ENCODE measurements at regions of chr4 and their contacts with region 1.

Region 1: GRCh38 chr4:55906999-55907398 is 41.7 kb upstream of the CEP135 start:
- DNase-seq: no peak
- H3K4me3 Mint-ChIP-seq: no peak overlapping the region
- H3K27ac Mint-ChIP-seq: peak overlapping the region; percentile 65
- H3K4me1 Mint-ChIP-seq: peaks cover 24% of the 10 kb centered on the region
- H3K27me3 Mint-ChIP-seq: no peaks in the 10 kb centered on the region

Region 2: DNA sequence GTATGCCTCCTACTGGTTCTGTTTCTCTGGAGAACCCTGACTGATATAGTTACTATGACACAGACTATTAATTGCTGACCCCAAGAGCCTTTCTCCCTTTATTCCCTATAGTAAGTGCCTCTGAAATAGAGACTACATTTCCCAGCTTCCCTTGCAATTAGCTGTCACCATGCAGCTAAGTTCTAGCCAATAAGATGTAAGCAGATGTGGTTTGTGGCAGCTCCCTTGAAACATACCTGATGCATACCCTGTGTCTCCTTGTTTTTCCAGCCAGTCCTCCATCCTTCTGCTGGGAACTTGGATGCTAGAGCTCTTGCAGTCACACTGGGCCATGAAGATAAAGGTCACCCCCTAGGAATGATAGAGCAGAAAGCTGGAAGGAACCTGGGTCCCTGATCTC is 520.9 kb before region 1 on chr4:
- CTCF ChIA-PET with region 1: no interaction called
- POLR2A ChIA-PET with region 1: no interaction called
- intact Hi-C with region 1: no loop called
- DNase-seq: no peak
- H3K4me3 Mint-ChIP-seq: no peak overlapping the region
- H3K27ac Mint-ChIP-seq: no peak overlapping the region
- H3K4me1 Mint-ChIP-seq: peaks cover 7% of the 10 kb centered on the region
- H3K27me3 Mint-ChIP-seq: no peaks in the 10 kb centered on the region

Region 3: DNA sequence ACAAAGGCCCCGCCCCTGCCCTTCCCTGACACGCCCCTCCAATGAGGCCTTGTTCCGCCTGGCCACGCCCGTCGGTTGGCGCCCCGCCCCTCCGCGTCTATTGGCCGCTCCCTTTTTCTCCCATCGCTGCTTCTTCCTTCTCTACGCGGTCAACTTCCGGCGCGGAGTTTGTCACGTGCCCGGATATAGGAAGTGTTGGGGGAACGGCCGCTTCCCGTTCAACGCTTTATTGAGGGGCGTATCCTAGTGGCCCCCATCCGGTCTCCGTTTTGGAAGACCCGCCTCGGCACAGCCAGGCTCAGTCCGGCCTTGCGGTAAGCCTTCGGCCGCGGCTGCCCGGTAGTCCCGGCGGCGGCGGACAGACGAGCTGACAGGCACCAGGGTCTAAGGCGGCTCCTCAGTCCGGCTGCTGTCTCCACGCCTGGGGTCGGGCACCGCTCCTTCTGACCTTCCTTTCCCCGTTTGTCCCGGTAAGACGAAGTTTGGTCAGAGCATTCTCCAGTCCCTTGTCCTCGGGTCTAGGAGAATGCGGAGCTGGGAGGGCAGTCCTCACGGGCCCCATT is 53.4 kb before region 1 on chr4 and contains the start of gene EXOC1:
- CTCF ChIA-PET with region 1: no interaction called
- POLR2A ChIA-PET with region 1: no interaction called
- intact Hi-C with region 1: loop called (anchors 2 kb)
- DNase-seq: peak; percentile 99
- H3K4me3 Mint-ChIP-seq: peak within 1 kb of the TSS; percentile 7
- H3K27ac Mint-ChIP-seq: peak within 1 kb of the TSS; percentile 82
- H3K4me1 Mint-ChIP-seq: peaks cover 33% of the 10 kb centered on the region
- H3K27me3 Mint-ChIP-seq: no peaks in the 10 kb centered on the region
- total RNA-seq, gene EXOC1: 21.9 to 22.4 TPM

Region 4: DNA sequence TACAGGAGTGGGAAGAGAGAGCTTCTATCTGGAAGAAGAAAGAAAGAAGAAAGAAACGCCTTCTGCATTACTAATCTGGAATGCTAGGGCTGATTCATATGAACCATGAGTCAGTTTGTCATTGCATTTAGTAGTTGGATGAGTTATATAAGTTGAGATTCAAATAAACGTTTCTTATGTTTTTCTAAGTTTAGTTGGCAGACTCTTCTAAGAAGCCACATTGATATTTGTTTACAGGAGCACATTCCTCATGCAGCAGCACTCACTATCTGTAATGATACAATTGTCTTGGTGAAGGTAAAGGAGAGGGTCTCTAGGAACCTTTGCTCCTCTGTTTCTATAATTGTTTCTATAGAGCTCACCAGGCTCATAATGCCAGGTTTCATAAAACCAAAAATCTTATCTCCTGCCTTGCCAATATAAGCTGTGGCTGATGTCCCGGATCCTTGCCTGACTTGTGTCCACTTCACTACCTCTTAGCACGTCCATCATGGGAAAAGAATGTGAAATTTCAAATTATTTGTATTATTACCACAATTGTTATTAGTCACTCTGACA is 734.6 kb after region 1 on chr4:
- CTCF ChIA-PET with region 1: no interaction called
- POLR2A ChIA-PET with region 1: no interaction called
- intact Hi-C with region 1: no loop called
- DNase-seq: no peak
- H3K4me3 Mint-ChIP-seq: no peak overlapping the region
- H3K27ac Mint-ChIP-seq: peak overlapping the region; percentile 80
- H3K4me1 Mint-ChIP-seq: peaks cover 32% of the 10 kb centered on the region
- H3K27me3 Mint-ChIP-seq: peaks cover 8% of the 10 kb centered on the region